ENCODE measurements at regions of chr10 and their contacts with region 1.

Region 1: GRCh38 chr10:31707093-31708039 is 221.3 kb downstream of the ARHGAP12 start:
- DNase-seq: peak; percentile 72 to 83
- ATAC-seq: peak; percentile 82 to 95 (median 89)
- H3K4me3 ChIP-seq: peak overlapping the region in 6 of 10 donors; percentile 26 to 36 (median 34)
- H3K27ac ChIP-seq: peak overlapping the region; percentile 62 to 97 (median 88)
- H3K4me1 ChIP-seq: peaks cover 15 to 64% (median 50%) of the 10 kb centered on the region in 9 donors
- H3K27me3 ChIP-seq: no peaks in the 10 kb centered on the region
- CTCF ChIP-seq: no peak

Region 2: GRCh38 chr10:31526681-31527080 is 180.7 kb before region 1 on chr10:
- intact Hi-C with region 1: loop called in 1 of 10 experiments (anchors 10 kb)
- DNase-seq: no peak
- ATAC-seq: no peak
- H3K4me3 ChIP-seq: no peak overlapping the region
- H3K27ac ChIP-seq: peak overlapping the region in 5 of 10 donors; percentile 31 to 49 (median 36)
- H3K4me1 ChIP-seq: peaks cover 0 to 31% (median 7%) of the 10 kb centered on the region in 9 donors
- H3K27me3 ChIP-seq: no peaks in the 10 kb centered on the region
- CTCF ChIP-seq: no peak

Region 3: DNA sequence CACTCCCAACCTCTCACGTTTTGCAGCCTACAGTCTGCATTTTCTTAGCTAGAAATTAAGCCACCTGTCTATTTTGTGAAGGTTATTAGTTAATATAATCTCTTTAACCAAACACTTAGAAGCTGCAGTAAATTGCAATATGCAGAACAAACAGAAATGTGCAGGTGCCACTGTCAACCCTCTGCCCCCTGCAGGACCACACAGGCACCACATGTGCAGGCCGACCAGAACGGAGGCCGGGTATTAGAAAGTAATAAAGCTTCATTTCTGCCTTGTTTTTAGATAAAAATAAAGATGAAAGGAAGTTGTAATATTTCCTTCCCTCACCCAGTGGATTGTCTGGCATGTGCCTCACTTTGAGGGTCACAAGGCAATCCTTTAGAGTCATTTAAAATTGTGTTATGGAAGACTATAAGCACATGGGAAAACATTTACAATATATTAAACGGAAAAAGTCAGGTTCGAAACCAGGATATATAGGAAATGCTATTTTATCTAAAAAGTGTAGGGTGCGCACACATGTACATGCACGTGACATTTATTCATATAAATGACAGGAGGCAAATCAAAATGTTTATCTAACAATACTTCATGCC is 63.0 kb after region 1 on chr10:
- intact Hi-C with region 1: loop called in 1 of 10 experiments (anchors 2 kb)
- DNase-seq: peak in 1 of 2 donors; percentile 60
- ATAC-seq: peak in 6 of 8 donors; percentile 63 to 85 (median 72)
- H3K4me3 ChIP-seq: no peak overlapping the region
- H3K27ac ChIP-seq: peak overlapping the region in 2 of 10 donors; percentile 1 to 11
- H3K4me1 ChIP-seq: peaks cover 0 to 14% (median 0%) of the 10 kb centered on the region in 9 donors
- H3K27me3 ChIP-seq: no peaks in the 10 kb centered on the region
- CTCF ChIP-seq: peak; percentile 64 to 91 (median 85)

Measured in heart right ventricle (tissue), 16 donors.